Caco-2 (cell line): ENCODE measurements at regions of chr9 and their contacts with region 1.

Region 1: DNA sequence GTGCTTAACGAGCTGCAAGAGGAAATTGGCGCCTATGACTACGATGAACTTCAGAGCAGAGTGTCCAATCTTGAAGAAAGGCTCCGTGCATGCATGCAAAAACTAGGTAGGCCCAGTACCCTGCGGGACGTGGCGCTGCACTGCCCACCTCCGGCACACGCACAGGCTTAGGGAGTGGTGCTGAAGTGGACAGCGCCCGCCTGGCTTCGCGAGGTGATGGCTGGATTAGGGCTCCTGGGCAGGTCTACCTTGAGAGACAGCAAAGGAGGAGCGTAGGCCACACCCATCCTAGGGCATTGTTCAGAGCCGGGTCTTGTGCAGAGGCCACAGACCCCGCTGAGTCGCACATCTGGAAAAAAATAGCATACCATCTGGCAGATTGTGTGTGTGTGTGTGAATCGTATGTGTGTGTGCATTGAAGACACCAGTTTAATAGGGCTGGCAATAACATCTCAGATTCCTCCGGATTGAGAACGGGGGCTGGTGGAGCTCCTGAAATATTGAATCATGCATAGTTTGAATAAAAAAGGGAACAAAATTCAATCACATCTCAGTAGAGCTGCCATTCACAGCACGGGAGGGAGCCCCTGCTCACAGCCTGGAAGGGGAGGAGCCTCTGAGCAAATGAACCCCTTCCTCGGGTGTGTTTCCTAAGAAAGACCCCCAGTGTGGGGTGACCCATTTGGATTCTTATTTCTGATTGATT is 11.1 kb downstream of the OLFM1 start:
- DNase-seq: peak; percentile 56 to 64
- H3K4me3 ChIP-seq: no peak overlapping the region
- H3K4me3 Mint-ChIP-seq: no peak overlapping the region
- H3K27ac Mint-ChIP-seq: no peak overlapping the region
- H3K4me1 ChIP-seq: no peaks in the 10 kb centered on the region
- H3K4me1 Mint-ChIP-seq: no peaks in the 10 kb centered on the region
- H3K27me3 ChIP-seq: no peaks in the 10 kb centered on the region
- H3K27me3 Mint-ChIP-seq: peaks cover 23% of the 10 kb centered on the region
- CTCF ChIP-seq: no peak

Region 2: GRCh38 chr9:135077497-135078200 is 20.9 kb before region 1 on chr9:
- CTCF ChIA-PET with region 1: no interaction called
- POLR2A ChIA-PET with region 1: no interaction called
- intact Hi-C with region 1: loop called (anchors 2 kb)
- DNase-seq: peak; percentile 38 to 52
- H3K4me3 ChIP-seq: no peak overlapping the region
- H3K4me3 Mint-ChIP-seq: no peak overlapping the region
- H3K27ac Mint-ChIP-seq: no peak overlapping the region
- H3K4me1 ChIP-seq: no peaks in the 10 kb centered on the region
- H3K4me1 Mint-ChIP-seq: no peaks in the 10 kb centered on the region
- H3K27me3 ChIP-seq: no peaks in the 10 kb centered on the region; the same call in 1 of the 2 replicates
- H3K27me3 Mint-ChIP-seq: peaks cover 8% of the 10 kb centered on the region
- CTCF ChIP-seq: no peak